ENCODE measurements at regions of chr18 and their contacts with region 1.

Region 1: DNA sequence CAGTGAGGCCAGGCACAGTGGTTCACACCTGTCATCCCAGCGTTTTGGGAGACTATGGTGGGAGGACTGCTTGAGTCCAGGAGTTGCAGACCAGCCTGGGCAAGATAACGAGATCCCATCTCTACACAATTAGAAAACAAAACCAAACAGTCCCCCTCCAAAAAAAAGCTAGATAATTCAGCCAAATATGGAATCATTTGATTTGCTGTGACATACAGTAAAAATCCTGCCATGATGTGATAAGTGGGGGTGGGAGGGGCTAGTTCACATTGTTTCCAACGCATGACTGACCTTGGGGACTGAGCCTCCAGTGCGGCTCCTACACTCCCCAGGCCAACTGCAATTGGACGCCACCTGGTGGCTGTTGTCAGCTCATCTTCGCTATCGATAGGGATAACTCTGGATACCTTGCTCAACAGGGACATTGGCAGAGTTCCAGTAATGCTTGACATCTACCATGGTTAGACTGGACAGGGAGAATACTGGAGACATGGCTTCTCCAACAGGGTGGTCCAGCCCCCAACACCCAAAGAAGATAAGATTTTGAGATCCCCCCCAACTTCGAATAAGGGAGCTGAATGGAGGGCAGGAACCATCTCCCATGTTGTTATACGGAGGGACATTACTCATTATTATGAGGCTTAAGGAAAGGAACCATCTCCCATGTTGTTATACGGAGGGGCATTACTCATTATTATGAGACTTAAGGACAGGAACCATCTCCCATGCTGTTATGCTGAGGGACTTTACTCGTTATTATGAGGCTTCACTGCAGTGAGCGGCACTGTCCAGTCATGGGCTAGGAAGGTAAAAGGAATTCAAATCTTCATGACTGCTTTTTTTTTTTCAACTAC is 135.9 kb downstream of the TGIF1 start:
- DNase-seq: peak; percentile 85 to 87
- H3K4me3 ChIP-seq: no peak overlapping the region
- H3K4me3 Mint-ChIP-seq: no peak overlapping the region
- H3K27ac Mint-ChIP-seq: no peak overlapping the region
- H3K4me1 ChIP-seq: peaks cover 7% of the 10 kb centered on the region; the same call in 1 of the 2 replicates
- H3K4me1 Mint-ChIP-seq: peaks cover 16% of the 10 kb centered on the region
- H3K27me3 ChIP-seq: no peaks in the 10 kb centered on the region
- H3K27me3 Mint-ChIP-seq: no peaks in the 10 kb centered on the region
- CTCF ChIP-seq: peak; percentile 65 to 84

Region 2: GRCh38 chr18:3281456-3282400 is 304.2 kb before region 1 on chr18:
- CTCF ChIA-PET with region 1: interaction called, 4 read pairs
- POLR2A ChIA-PET with region 1: no interaction called
- intact Hi-C with region 1: loop called (anchors 1 kb)
- DNase-seq: peak in 1 of 2 experiments; percentile 78
- H3K4me3 ChIP-seq: no peak overlapping the region
- H3K4me3 Mint-ChIP-seq: no peak overlapping the region
- H3K27ac Mint-ChIP-seq: no peak overlapping the region
- H3K4me1 ChIP-seq: no peaks in the 10 kb centered on the region
- H3K4me1 Mint-ChIP-seq: peaks cover 13% of the 10 kb centered on the region
- H3K27me3 ChIP-seq: no peaks in the 10 kb centered on the region
- H3K27me3 Mint-ChIP-seq: no peaks in the 10 kb centered on the region
- CTCF ChIP-seq: peak; percentile 33 to 66

Region 3: DNA sequence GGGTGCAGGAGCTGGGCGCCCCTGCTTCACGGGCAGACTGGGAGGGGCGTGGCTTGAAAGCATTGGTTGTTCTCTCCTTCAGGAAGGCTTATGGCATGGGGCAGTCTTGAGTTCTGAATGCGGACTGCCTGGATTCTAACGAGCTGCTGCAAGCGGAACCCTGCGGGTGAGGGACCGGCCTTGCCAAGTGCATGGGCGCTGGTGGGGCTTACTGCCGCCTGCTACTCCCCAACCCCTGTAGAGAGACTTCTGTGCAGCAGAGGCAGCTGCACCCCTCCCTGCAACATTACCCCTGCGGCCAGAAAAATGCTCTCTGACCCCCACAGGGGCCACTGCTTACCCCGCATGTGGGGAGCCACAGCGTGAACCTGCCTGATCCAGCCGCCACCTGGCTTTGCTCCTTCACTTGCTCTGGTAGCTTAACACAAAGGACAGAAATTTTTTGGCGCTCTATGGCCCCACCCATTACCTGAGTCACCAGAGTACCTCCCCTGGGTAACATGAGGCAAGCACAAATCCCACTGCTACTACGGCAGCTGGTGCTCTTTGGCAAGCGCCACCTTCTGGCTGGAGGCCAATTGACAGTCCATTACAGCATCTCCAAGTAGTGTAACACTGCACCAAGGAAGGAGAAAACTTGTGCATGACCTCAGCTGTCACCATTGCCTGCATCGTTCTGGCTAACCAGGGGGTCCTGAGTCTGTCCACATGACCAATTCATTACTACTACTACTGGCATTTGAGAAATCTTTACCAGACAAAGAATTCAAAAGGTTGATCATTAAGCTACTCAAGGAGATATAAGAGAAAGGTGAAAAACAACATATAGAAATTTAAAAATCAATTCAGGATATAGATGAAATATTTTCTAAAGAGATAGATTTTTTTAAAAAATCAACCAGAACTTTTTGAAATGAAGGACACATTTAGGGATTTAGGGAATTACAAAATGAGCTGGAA is 288.6 kb before region 1 on chr18:
- CTCF ChIA-PET with region 1: no interaction called
- POLR2A ChIA-PET with region 1: no interaction called
- intact Hi-C with region 1: loop called (anchors 5 kb)
- DNase-seq: peak; percentile 94 to 95
- H3K4me3 ChIP-seq: peak overlapping the region; percentile 70
- H3K4me3 Mint-ChIP-seq: peak overlapping the region; percentile 93
- H3K27ac Mint-ChIP-seq: peak overlapping the region; percentile 89
- H3K4me1 ChIP-seq: no peaks in the 10 kb centered on the region
- H3K4me1 Mint-ChIP-seq: peaks cover 7% of the 10 kb centered on the region
- H3K27me3 ChIP-seq: no peaks in the 10 kb centered on the region
- H3K27me3 Mint-ChIP-seq: peaks cover 4% of the 10 kb centered on the region
- CTCF ChIP-seq: peak; percentile 87 to 94

Region 4: GRCh38 chr18:3454365-3455089 is 131.4 kb before region 1 on chr18:
- CTCF ChIA-PET with region 1: interaction called, 4 read pairs
- POLR2A ChIA-PET with region 1: no interaction called
- intact Hi-C with region 1: loop called (anchors 1 kb)
- DNase-seq: peak; percentile 52 to 69
- H3K4me3 ChIP-seq: peak overlapping the region; percentile 15; the same call in 1 of the 2 replicates
- H3K4me3 Mint-ChIP-seq: peak overlapping the region; percentile 87
- H3K27ac Mint-ChIP-seq: peak overlapping the region; percentile 97
- H3K4me1 ChIP-seq: peaks cover 44% of the 10 kb centered on the region
- H3K4me1 Mint-ChIP-seq: peaks cover 39% of the 10 kb centered on the region
- H3K27me3 ChIP-seq: no peaks in the 10 kb centered on the region
- H3K27me3 Mint-ChIP-seq: no peaks in the 10 kb centered on the region
- CTCF ChIP-seq: peak; percentile 57 to 69

Measured in Caco-2 (cell line).